Activated CD4-positive, alpha-beta T cell treated with anti-CD3 and anti-CD28 coated beads, Interleukin-2, amount 10 ng/mL, durations not matched to agents 24 days and 14 days (primary cell): ENCODE measurements at regions of chr13 and their contacts with region 1.

Region 1: DNA sequence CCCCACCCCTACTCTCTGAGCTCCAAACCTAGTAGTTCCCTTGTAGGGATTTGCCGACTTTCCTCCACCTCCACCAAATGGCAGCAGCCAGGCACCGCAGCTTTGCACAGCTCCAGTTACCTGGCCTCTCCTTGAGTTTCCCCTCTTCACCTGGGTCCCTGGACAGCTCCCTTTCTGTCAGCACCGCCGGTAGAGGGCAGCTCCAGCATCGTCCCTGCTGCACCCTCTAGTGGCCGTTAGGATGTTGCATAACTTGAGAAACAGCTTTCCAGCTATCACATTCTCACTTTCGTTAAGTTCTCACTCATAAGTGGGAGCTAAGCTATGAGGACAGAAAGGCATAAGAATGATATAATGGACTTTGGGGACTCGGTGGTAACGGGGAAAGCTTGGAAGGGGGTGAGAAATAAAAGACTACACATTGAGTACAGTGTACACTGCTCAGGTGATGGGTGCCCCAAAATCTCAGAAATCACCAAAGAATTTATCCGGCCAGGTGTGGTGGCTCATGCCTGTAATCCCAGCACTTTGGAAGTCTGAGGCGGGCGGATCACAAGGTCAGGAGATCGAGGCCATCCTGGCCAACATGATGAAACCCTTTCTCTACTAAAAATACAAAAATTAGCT is 60.4 kb upstream of the OLFM4 start:
- DNase-seq: peak; percentile 87
- H3K4me3 Mint-ChIP-seq: no peak overlapping the region
- H3K27ac Mint-ChIP-seq: no peak overlapping the region
- H3K4me1 Mint-ChIP-seq: no peaks in the 10 kb centered on the region
- H3K27me3 Mint-ChIP-seq: peaks cover 3% of the 10 kb centered on the region

Region 2: GRCh38 chr13:52371736-52372247 is 596.4 kb before region 1 on chr13:
- intact Hi-C with region 1: no loop called
- DNase-seq: no peak
- H3K4me3 Mint-ChIP-seq: no peak overlapping the region
- H3K27ac Mint-ChIP-seq: no peak overlapping the region
- H3K4me1 Mint-ChIP-seq: no peaks in the 10 kb centered on the region
- H3K27me3 Mint-ChIP-seq: peaks cover 2% of the 10 kb centered on the region

Region 3: GRCh38 chr13:52599848-52600603 is 368.2 kb before region 1 on chr13:
- intact Hi-C with region 1: loop called (anchors 5 kb)
- DNase-seq: peak; percentile 70
- H3K4me3 Mint-ChIP-seq: peak overlapping the region; percentile 80
- H3K27ac Mint-ChIP-seq: no peak overlapping the region
- H3K4me1 Mint-ChIP-seq: peaks cover 7% of the 10 kb centered on the region
- H3K27me3 Mint-ChIP-seq: peaks cover 22% of the 10 kb centered on the region

Region 4: GRCh38 chr13:52665325-52665724 is 302.9 kb before region 1 on chr13:
- intact Hi-C with region 1: loop called (anchors 1 kb)
- DNase-seq: no peak
- H3K4me3 Mint-ChIP-seq: no peak overlapping the region
- H3K27ac Mint-ChIP-seq: no peak overlapping the region
- H3K4me1 Mint-ChIP-seq: no peaks in the 10 kb centered on the region
- H3K27me3 Mint-ChIP-seq: no peaks in the 10 kb centered on the region